GM12878 (cell line): ENCODE measurements at regions of chrX and their contacts with region 1.

Region 1: GRCh38 chrX:71283403-71284143 is at the start of gene NONO:
- DNase-seq: peak; percentile 90
- ATAC-seq: peak; percentile 85
- H3K4me3 ChIP-seq: peak within 1 kb of the TSS; percentile 78
- H3K27ac ChIP-seq: peak within 1 kb of the TSS; percentile 91
- H3K4me1 ChIP-seq: peaks cover 4% of the 10 kb centered on the region
- H3K27me3 ChIP-seq: no peaks in the 10 kb centered on the region
- CTCF ChIP-seq: peak in 1 of 3 experiments; percentile 20; a peak in 1 of 6 replicates
- EP300 ChIP-seq: no peak
- POLR2A ChIP-seq: peak; percentile 88
- RAD21 ChIP-seq: no peak
- polyA plus RNA-seq, gene NONO: 206 to 359 TPM

Region 2: DNA sequence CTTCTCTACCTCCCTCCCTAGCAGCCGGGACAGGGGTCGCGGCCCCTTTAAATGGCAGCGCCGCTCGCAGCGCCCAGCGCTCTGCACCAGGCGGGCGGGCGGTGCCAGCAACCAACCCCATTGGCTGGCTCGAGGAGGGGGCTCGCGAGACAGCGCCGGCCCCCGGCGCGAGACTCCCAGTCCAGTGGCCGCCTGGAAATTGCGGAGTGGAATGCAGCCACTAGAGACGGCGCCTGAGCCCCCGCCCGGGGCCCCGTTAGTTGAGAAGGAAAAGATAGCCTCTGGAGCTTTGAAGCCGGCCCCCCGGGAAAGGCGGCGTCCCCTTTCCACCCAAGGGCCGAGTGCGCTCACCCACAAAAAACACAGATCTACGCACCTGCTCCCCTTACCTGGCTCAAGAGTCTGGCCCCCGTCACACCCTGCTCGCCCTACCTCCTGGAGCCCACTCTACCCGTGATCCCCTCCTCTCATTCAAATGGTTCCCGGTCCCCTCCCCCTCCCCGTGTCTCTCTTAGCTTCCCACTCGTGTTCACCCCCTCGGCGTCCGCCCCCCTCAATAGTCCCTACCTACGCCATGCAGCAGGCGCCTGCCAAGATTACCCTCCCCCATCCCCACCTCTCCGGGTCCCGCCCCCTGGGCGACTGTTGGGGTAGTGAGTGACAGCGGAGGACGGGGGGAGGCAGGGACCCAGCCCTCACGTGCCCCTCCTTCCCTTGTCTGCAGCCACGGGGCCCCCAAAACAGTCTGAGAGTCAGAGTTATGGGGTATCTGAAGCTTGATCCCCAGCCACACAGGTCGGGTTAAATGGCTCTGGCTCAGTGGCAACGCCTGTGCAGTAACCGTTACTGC is 29.3 kb before region 1 on chrX and contains the start of gene ZMYM3:
- CTCF ChIA-PET with region 1: interaction called, 3 read pairs
- POLR2A ChIA-PET with region 1: interaction called, 18 read pairs
- RAD21 ChIA-PET with region 1: interaction called, 3 read pairs
- SMC1A ChIA-PET with region 1: interaction called, 8 read pairs
- in situ Hi-C with region 1: no loop called
- intact Hi-C with region 1: loop called (anchors 1 kb)
- DNase-seq: peak; percentile 24
- ATAC-seq: peak; percentile 93
- H3K4me3 ChIP-seq: peak within 1 kb of the TSS; percentile 89
- H3K27ac ChIP-seq: peak within 1 kb of the TSS; percentile 72
- H3K4me1 ChIP-seq: peaks cover 6% of the 10 kb centered on the region; the same call in 1 of the 2 replicates
- H3K27me3 ChIP-seq: no peaks in the 10 kb centered on the region
- CTCF ChIP-seq: no peak
- EP300 ChIP-seq: no peak
- POLR2A ChIP-seq: peak; percentile 69
- RAD21 ChIP-seq: no peak
- polyA plus RNA-seq, gene ZMYM3: 2.3 to 5.1 TPM

Region 3: GRCh38 chrX:71302461-71303213 is 19.1 kb after region 1 on chrX:
- CTCF ChIA-PET with region 1: no interaction called
- POLR2A ChIA-PET with region 1: no interaction called
- RAD21 ChIA-PET with region 1: no interaction called
- SMC1A ChIA-PET with region 1: no interaction called
- in situ Hi-C with region 1: no loop called
- intact Hi-C with region 1: no loop called
- DNase-seq: no peak
- ATAC-seq: no peak
- H3K4me3 ChIP-seq: no peak overlapping the region
- H3K27ac ChIP-seq: no peak overlapping the region
- H3K4me1 ChIP-seq: no peaks in the 10 kb centered on the region
- H3K27me3 ChIP-seq: no peaks in the 10 kb centered on the region; a peak in 1 of 4 replicates
- CTCF ChIP-seq: no peak
- EP300 ChIP-seq: no peak
- POLR2A ChIP-seq: no peak
- RAD21 ChIP-seq: no peak